ENCODE measurements at regions of chr11 and their contacts with region 1.

Region 1: DNA sequence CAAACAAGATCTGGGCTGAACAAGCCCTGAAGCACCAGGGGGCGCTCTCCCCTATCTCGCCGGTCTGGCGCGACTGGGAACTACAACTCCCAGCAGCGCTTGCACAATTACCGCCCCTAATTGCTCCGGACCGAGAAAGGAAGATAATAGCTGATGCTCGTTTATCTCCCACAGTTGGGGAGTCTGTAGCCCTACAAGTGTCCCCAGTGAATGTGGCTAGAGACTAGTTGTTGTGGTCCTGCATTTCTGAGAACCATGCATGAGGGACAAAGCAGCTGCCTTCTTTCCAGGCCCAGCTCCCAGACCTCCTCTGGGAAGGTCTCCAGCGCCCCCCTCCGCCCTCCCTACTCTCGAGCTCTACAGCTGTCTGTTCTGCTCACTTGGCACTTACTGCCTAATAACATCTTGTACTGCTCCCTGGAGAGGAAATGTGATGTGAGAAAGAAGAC is 34.4 kb downstream of the NRXN2 start:
- DNase-seq: no peak
- H3K4me3 ChIP-seq: peak overlapping the region; percentile 60
- CTCF ChIP-seq: peak; percentile 96

Region 2: DNA sequence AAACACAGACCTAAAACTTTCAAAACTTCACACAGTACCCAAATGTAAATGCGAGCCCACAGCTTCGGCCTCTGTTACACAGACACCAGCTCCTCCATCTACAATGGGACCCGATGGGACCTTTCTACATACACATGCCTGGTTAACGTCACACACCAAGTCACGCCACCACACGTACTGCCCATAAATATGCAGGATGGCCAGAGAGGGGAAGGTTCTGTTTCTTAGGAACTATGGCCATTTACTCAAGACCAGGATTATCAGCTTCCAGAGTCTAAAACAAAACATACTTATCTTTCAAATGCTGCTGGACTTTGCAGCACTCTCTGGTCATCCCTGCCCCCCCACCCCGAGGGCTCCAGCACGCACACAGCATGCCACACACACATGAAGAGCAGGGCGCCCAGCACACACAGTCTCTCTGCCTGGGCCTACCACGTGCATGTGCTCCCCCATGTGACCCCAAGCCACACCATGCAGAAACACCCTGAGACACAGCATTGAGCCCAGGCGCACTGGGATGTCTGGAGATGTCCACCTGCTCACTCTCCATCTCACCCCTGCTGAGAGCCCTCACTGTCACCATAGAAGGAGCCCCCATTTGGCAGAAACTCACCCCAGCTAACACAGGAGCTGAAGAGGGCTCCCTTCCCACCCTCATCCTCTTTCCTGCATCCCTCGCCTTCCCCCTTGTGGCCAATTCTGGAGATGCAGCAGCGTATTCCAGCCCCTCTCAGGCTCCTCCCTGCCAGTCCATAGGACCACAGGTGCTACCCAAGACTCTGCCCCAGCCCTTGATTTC is 35.8 kb before region 1 on chr11:
- CTCF ChIA-PET with region 1: interaction called, 56 read pairs
- POLR2A ChIA-PET with region 1: no interaction called
- DNase-seq: no peak
- H3K4me3 ChIP-seq: no peak overlapping the region
- CTCF ChIP-seq: peak; percentile 95

Region 3: DNA sequence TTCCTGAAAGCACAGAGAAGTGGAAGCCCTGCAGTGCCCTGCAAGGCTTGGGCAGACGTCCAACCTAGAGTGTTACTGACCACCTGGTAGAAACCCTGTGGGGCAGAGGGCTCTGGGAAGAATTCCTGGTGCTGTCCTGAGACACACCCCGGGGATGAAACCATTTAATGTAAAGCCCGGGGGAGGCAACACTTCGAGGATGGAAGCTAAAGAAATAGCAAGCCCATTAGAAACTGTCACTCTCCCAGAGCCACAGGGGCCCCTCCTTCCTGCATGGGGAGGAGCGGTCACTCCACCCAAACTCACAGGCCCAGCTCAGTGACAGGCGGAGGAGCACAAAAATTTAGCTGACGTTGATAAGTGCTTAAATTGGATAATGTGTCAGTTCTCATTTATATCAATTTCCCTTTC is 23.1 kb before region 1 on chr11:
- CTCF ChIA-PET with region 1: interaction called, 32 read pairs
- POLR2A ChIA-PET with region 1: no interaction called
- DNase-seq: no peak
- H3K4me3 ChIP-seq: no peak overlapping the region
- CTCF ChIP-seq: no peak

Region 4: DNA sequence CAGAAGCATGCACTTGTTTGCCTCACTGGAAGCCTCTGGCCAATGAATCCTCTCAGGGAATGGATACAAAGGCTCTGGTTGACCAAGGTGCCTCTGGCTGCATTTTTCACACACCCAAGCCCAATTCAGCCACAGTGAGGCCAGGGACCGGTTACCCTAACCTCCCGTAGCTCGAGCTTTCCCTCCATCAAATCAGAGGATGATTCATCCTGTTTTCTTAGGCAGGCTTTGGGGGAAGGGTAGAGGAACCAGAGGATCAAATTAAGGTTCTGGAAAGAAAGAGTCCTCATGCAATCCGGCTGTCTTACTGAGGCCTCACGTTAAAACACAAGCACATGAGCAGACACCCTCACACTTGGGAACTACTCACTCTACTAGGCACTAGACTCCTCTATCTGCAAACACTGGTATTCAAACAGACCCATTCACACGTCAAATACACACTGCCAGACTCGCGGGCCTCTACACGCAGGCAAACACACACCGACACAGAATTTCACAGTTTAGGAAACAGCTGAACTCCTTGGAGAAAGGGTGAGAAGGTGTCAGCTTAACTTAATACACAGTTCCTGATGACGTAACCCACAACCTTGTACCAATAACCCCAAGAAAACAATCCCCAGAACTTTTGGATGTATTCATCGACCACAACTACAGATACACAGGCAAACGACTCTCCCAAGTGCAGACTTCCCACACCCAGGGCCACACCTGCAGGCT is 22.0 kb after region 1 on chr11:
- CTCF ChIA-PET with region 1: interaction called, 79 read pairs
- POLR2A ChIA-PET with region 1: no interaction called
- DNase-seq: no peak
- H3K4me3 ChIP-seq: no peak overlapping the region
- CTCF ChIP-seq: no peak

Region 5: GRCh38 chr11:64723117-64723906 is 34.8 kb after region 1 on chr11 and contains the start of gene NRXN2:
- CTCF ChIA-PET with region 1: interaction called, 23 read pairs
- POLR2A ChIA-PET with region 1: no interaction called
- DNase-seq: no peak
- H3K4me3 ChIP-seq: peak within 1 kb of the TSS; percentile 65
- CTCF ChIP-seq: peak; percentile 97

Region 6: GRCh38 chr11:64742889-64743590 is 54.5 kb after region 1 on chr11:
- CTCF ChIA-PET with region 1: interaction called, 14 read pairs
- POLR2A ChIA-PET with region 1: no interaction called
- DNase-seq: no peak
- H3K4me3 ChIP-seq: peak overlapping the region; percentile 50
- CTCF ChIP-seq: peak; percentile 81